Caco-2 (cell line): ENCODE measurements at regions of chr20 and their contacts with region 1.

Region 1: DNA sequence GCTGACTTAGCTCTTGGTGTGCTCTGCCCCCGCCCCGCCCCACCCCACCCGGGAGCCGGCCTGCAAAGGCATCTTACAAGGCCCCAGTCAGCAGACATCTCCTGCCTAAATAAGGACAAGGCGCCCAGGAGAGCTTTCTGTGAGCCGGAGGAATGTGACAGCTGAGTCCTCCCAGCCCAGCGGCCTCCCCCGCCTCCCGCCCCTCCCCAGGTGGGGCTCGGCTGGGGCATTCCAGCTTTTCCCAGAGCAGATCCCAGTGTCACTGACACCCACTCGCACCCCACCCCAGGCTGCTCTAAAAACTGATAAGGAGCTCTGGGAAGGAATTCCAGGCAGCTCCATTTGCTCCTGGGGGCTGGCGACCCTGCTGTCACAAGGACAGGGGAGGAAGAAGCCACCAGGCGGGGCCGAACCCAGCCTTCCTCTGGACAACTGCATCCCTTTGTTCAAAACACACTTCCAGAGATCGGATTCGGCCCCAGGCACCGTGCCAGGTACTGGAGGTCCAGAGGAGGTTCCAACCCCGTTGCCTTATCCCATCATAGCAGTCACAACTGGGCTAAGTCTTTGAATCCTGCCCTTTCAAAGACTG is 49.7 kb downstream of the JPH2 start:
- DNase-seq: peak; percentile 92 to 98
- H3K4me3 ChIP-seq: no peak overlapping the region
- H3K4me3 Mint-ChIP-seq: peak overlapping the region; percentile 55
- H3K27ac Mint-ChIP-seq: peak overlapping the region; percentile 82
- H3K4me1 ChIP-seq: peaks cover 47% of the 10 kb centered on the region
- H3K4me1 Mint-ChIP-seq: peaks cover 39% of the 10 kb centered on the region
- H3K27me3 ChIP-seq: no peaks in the 10 kb centered on the region
- H3K27me3 Mint-ChIP-seq: no peaks in the 10 kb centered on the region
- CTCF ChIP-seq: peak in 1 of 2 experiments; percentile 13

Region 2: GRCh38 chr20:44104798-44105517 is 32.3 kb before region 1 on chr20:
- CTCF ChIA-PET with region 1: no interaction called
- POLR2A ChIA-PET with region 1: no interaction called
- intact Hi-C with region 1: no loop called
- DNase-seq: no peak
- H3K4me3 ChIP-seq: no peak overlapping the region
- H3K4me3 Mint-ChIP-seq: no peak overlapping the region
- H3K27ac Mint-ChIP-seq: no peak overlapping the region
- H3K4me1 ChIP-seq: no peaks in the 10 kb centered on the region
- H3K4me1 Mint-ChIP-seq: no peaks in the 10 kb centered on the region
- H3K27me3 ChIP-seq: no peaks in the 10 kb centered on the region
- H3K27me3 Mint-ChIP-seq: peaks cover 26% of the 10 kb centered on the region
- CTCF ChIP-seq: no peak

Region 3: DNA sequence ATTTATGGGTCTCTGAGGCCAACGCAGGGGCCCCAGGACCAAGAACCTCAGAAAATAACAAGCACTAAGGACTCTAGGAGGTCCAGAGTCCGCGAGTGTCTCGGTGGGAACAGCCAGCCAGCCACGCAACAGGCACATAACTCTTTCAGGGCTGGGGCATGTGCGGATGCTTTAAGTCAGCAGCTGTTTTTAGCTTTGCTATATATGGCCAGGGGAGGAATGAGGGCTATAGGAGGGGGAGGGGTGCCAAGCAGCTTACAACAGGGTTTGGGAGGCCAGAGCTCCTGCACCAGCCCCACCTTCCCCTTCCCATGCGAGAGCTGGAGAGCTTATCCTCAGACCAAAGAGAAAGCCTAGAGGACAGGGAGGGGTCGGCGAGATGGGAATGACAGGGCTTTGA is 43.5 kb after region 1 on chr20:
- CTCF ChIA-PET with region 1: interaction called, 3 read pairs
- POLR2A ChIA-PET with region 1: interaction called, 20 read pairs
- intact Hi-C with region 1: loop called (anchors 1 kb)
- DNase-seq: peak; percentile 85 to 96
- H3K4me3 ChIP-seq: no peak overlapping the region
- H3K4me3 Mint-ChIP-seq: peak overlapping the region; percentile 2
- H3K27ac Mint-ChIP-seq: peak overlapping the region; percentile 2
- H3K4me1 ChIP-seq: peaks cover 49% of the 10 kb centered on the region
- H3K4me1 Mint-ChIP-seq: peaks cover 27% of the 10 kb centered on the region
- H3K27me3 ChIP-seq: no peaks in the 10 kb centered on the region
- H3K27me3 Mint-ChIP-seq: no peaks in the 10 kb centered on the region
- CTCF ChIP-seq: no peak